Ascending aorta (tissue), 2 donors: ENCODE measurements at regions of chr14 and their contacts with region 1.

Region 1: GRCh38 chr14:76918751-76919543 is 92.7 kb downstream of the LRRC74A start:
- DNase-seq: peak; percentile 91 to 99
- H3K4me3 ChIP-seq: peak overlapping the region in 1 of 2 donors; percentile 22
- H3K27ac ChIP-seq: peak overlapping the region; percentile 85 to 86
- H3K4me1 ChIP-seq: peaks cover 23 to 39% of the 10 kb centered on the region in 2 donors
- H3K27me3 ChIP-seq: no peaks in the 10 kb centered on the region
- CTCF ChIP-seq: peak in 1 of 3 experiments; percentile 24

Region 2: GRCh38 chr14:76426161-76426696 is 492.7 kb before region 1 on chr14:
- intact Hi-C with region 1: no loop called
- DNase-seq: no peak
- H3K4me3 ChIP-seq: no peak overlapping the region
- H3K27ac ChIP-seq: no peak overlapping the region
- H3K4me1 ChIP-seq: no peaks in the 10 kb centered on the region
- H3K27me3 ChIP-seq: no peaks in the 10 kb centered on the region
- CTCF ChIP-seq: no peak

Region 3: DNA sequence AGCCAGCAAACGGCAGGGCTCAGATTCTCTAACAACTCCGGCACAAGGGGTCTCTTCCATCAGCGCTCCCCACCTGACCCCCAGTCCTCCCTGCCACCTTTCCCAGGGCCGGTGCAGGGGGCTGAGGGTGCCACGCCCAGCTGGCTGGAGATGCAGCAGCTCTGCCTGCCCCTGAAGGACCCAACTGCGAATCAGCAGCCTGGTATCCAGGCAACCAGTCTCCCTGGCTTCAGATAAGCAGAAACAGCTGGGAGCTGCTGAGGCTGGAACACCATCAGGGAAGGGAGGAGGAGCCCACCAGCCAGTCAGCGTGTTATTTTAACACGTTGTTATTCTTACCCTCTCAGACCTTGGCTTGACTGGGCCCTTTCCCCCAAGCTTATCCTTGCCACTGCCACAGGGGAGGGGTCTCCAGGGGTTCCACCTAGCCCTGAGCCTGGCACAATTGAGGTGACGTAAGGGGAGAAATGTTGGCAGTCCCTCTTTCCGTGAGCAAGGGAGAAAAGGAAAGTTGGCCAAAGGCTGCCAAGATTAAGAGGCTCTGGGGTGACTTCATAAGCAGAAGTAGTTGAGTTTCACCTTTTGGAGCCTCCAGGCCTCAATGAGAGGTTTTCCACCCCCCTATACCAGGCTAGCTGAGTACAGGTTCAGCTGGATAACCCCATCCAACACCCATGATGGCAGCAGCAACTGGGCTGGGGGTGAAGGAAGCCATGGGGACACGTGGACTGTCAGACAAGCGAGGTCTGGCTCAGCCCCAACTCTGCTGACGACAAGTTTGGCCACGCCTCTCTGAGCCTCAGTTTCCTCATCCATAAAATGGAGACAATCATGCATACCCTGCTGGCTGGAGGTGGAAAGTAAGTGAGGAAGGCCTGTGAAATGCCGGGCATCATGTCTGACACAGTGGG is 18.5 kb after region 1 on chr14:
- intact Hi-C with region 1: loop called (anchors 1 kb)
- DNase-seq: peak in 1 of 2 donors; percentile 87
- H3K4me3 ChIP-seq: no peak overlapping the region
- H3K27ac ChIP-seq: peak overlapping the region; percentile 30 to 53
- H3K4me1 ChIP-seq: peaks cover 2 to 12% of the 10 kb centered on the region in 2 donors
- H3K27me3 ChIP-seq: no peaks in the 10 kb centered on the region
- CTCF ChIP-seq: no peak

Region 4: DNA sequence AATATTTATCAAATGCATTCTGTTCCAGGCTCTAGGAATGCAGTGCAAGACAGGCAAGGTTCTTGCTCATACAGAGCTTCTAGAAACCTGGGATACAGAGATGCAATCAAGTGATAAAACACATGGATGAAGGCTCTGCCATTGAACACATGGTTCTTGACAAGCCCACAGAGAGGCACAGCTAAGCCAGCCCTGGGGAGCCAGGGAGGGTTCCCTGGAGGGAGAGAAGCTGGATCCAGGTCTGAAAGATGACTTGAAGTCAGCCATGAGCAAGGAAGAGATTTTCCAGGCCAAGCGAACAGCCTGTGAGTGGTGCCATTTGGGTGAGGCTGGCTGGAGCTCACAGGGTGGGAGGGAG is 43.3 kb after region 1 on chr14:
- intact Hi-C with region 1: loop called (anchors 1 kb)
- DNase-seq: no peak
- H3K4me3 ChIP-seq: peak overlapping the region; percentile 5 to 58
- H3K27ac ChIP-seq: peak overlapping the region; percentile 94 to 97
- H3K4me1 ChIP-seq: peaks cover 7 to 31% of the 10 kb centered on the region in 2 donors
- H3K27me3 ChIP-seq: no peaks in the 10 kb centered on the region
- CTCF ChIP-seq: no peak

Region 5: GRCh38 chr14:77028384-77029231 is 109.7 kb after region 1 on chr14 and contains the start of gene IRF2BPL:
- intact Hi-C with region 1: loop called (anchors 1 kb)
- DNase-seq: peak; percentile 94 to 99
- H3K4me3 ChIP-seq: peak within 1 kb of the TSS; percentile 91 to 92
- H3K27ac ChIP-seq: peak within 1 kb of the TSS; percentile 99 to 100
- H3K4me1 ChIP-seq: peaks cover 19 to 61% of the 10 kb centered on the region in 2 donors
- H3K27me3 ChIP-seq: no peaks in the 10 kb centered on the region
- CTCF ChIP-seq: no peak
- total RNA-seq, gene IRF2BPL: 68.1 TPM

Region 6: GRCh38 chr14:77040059-77040740 is 121.3 kb after region 1 on chr14:
- intact Hi-C with region 1: loop called (anchors 2 kb)
- DNase-seq: peak; percentile 90 to 98
- H3K4me3 ChIP-seq: peak overlapping the region; percentile 1 to 59
- H3K27ac ChIP-seq: peak overlapping the region; percentile 78 to 88
- H3K4me1 ChIP-seq: peaks cover 26 to 71% of the 10 kb centered on the region in 2 donors
- H3K27me3 ChIP-seq: no peaks in the 10 kb centered on the region
- CTCF ChIP-seq: no peak